Spleen (tissue), 13 donors: ENCODE measurements at regions of chr22 and their contacts with region 1.

Region 1: DNA sequence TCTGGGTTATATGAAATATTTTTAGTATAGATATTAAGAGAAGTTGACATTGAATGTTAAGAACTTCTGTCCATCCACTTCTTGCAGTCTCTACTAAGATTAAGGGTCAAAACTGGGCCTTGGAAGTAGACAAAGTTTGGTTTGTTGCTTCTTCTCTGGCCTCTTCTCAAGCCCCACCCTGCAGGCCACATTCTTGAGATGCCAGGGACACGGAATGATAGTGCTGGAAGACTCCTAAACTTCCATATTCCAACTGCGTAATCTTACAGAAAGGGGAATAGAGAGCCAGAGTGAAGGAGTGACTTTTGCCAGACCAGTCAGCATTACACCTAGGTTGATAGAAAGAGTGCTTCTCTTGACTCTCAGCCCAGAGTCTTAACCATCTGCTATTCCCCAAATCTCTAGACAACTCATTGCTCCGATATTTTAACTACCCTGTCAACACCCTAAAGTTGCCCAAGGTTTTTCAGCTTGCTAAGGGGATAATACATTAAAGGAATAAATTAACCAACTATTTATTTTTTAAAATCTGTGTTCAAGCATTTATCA is 136.4 kb upstream of the SYN3 start:
- DNase-seq: no peak
- H3K4me3 ChIP-seq: no peak overlapping the region
- H3K27ac ChIP-seq: no peak overlapping the region
- H3K4me1 ChIP-seq: no peaks in the 10 kb centered on the region
- H3K27me3 ChIP-seq: peaks cover 0 to 8% (median 0%) of the 10 kb centered on the region in 7 donors
- CTCF ChIP-seq: no peak
- POLR2A ChIP-seq: no peak

Region 2: DNA sequence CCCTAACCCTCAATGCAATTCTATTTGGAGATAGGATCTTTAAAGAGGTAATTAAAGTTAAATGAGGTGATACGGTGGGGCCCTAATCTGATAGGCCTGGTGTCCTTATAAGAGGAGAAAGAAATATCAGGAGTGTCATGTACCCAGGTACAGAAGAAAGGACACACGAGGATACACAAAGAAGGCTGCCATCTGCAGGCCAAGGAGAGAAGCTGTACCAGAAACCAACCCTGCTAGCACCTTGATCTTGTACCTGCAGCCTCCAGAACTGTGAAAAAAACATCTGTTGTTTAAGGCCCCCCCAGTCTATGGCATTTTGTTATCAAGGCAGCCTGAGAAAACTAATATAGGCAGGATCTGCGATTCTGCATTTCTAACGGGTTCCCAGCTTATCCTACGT is 675.8 kb before region 1 on chr22:
- intact Hi-C with region 1: loop called (anchors 10 kb)
- DNase-seq: no peak
- H3K4me3 ChIP-seq: no peak overlapping the region
- H3K27ac ChIP-seq: no peak overlapping the region
- H3K4me1 ChIP-seq: no peaks in the 10 kb centered on the region
- H3K27me3 ChIP-seq: no peaks in the 10 kb centered on the region
- CTCF ChIP-seq: peak in 1 of 11 experiments; percentile 13
- POLR2A ChIP-seq: no peak

Region 3: GRCh38 chr22:33073989-33074418 is 120.6 kb before region 1 on chr22:
- intact Hi-C with region 1: no loop called
- DNase-seq: no peak
- H3K4me3 ChIP-seq: no peak overlapping the region
- H3K27ac ChIP-seq: no peak overlapping the region
- H3K4me1 ChIP-seq: no peaks in the 10 kb centered on the region
- H3K27me3 ChIP-seq: peaks cover 0 to 17% (median 0%) of the 10 kb centered on the region in 7 donors
- CTCF ChIP-seq: no peak
- POLR2A ChIP-seq: no peak